ENCODE measurements at regions of chr17 and their contacts with region 1.

Region 1: GRCh38 chr17:30104575-30105339 is 11.9 kb upstream of the NSRP1 start:
- DNase-seq: peak; percentile 86
- H3K4me3 ChIP-seq: peak overlapping the region; percentile 57
- H3K27ac ChIP-seq: no peak overlapping the region
- H3K4me1 ChIP-seq: no peaks in the 10 kb centered on the region
- CTCF ChIP-seq: peak; percentile 99

Region 2: GRCh38 chr17:30236766-30237165 is 132.0 kb after region 1 on chr17:
- CTCF ChIA-PET with region 1: no interaction called
- POLR2A ChIA-PET with region 1: no interaction called
- intact Hi-C with region 1: loop called (anchors 10 kb)
- DNase-seq: no peak
- H3K4me3 ChIP-seq: no peak overlapping the region
- H3K27ac ChIP-seq: no peak overlapping the region
- H3K4me1 ChIP-seq: no peaks in the 10 kb centered on the region
- CTCF ChIP-seq: 0 out of 2 replicates have a peak, but pooled peaks have one; percentile 20

Region 3: DNA sequence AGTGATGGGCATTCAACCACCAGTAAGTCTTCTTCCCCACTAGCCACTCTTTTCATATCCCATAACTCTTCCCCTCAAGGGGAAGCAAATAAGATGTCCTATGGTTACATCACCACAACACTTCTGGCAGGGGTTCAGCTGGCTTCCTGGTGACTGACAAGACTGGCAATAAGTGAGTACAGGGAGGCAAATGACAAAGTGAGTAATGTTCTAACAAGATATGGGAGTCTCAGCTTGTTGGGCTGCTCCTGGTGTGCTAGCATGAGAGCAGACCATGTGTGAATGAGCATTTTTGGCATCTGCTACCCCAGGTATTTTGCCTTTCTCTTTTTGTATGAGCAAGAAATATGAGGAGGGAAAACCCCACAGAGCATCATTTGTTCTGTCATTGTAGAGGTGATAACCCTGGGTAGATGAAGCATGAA is 219.2 kb after region 1 on chr17:
- CTCF ChIA-PET with region 1: interaction called, 6 read pairs
- POLR2A ChIA-PET with region 1: interaction called, 10 read pairs
- intact Hi-C with region 1: no loop called
- DNase-seq: peak; percentile 55
- H3K4me3 ChIP-seq: peak overlapping the region; percentile 63
- H3K27ac ChIP-seq: peak overlapping the region; percentile 96
- H3K4me1 ChIP-seq: peaks cover 64% of the 10 kb centered on the region
- CTCF ChIP-seq: no peak

Measured in OCI-LY7 (cell line).